Caco-2 (cell line): ENCODE measurements at regions of chr7 and their contacts with region 1.

Region 1: DNA sequence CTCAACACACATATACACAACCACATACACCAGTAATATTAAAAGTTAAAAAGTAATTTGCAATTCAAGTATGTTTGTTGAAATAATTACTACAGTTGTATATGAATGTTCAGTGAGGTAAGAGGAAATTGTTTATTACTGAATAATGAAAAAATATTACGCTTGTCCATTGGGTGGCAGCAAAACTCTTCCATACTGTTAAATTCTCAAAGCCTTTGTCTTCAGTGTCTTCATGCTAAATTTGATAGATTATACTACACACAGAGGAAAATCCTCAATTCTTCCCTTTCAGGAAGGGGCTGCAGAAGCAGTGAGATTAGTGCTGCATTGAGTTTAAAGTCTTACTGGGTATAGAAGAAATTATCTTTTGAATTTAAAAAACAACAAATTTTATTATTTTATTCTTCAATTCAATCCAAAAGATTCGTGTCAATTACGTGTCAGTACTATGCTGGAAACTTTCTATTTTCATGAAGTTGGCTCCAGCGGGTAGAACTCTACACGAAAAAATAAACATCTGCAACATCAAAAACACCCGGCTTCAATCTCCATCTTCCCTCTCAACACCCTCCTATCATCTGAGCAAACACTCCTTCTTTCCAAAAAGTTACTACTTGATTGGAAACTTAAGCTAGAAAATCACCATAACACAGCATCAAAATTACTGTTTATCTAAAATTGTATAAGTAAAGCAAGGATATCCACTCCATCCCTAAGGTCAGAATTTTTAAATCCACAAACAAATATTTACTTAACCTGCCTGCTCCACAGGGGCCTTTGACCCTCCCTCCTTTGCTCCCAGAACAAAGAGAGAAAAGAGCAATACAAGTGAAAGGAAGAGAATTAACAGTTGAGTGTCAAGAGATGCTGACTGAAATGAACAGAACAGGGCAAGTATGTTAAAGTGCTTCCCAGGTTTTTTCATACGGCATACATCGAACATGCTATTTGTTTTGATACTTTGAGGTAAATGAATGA is 37.0 kb upstream of the TES start:
- DNase-seq: peak in 1 of 2 experiments; percentile 63
- H3K4me3 ChIP-seq: no peak overlapping the region
- H3K4me3 Mint-ChIP-seq: peak overlapping the region; percentile 6
- H3K27ac Mint-ChIP-seq: no peak overlapping the region
- H3K4me1 ChIP-seq: peaks cover 43% of the 10 kb centered on the region
- H3K4me1 Mint-ChIP-seq: peaks cover 37% of the 10 kb centered on the region
- H3K27me3 ChIP-seq: no peaks in the 10 kb centered on the region
- H3K27me3 Mint-ChIP-seq: no peaks in the 10 kb centered on the region
- CTCF ChIP-seq: peak; percentile 38 to 63

Region 2: GRCh38 chr7:116236020-116236630 is 62.8 kb after region 1 on chr7:
- CTCF ChIA-PET with region 1: interaction called, 3 read pairs
- POLR2A ChIA-PET with region 1: no interaction called
- intact Hi-C with region 1: loop called (anchors 1 kb)
- DNase-seq: peak in 1 of 2 experiments; percentile 47
- H3K4me3 ChIP-seq: no peak overlapping the region
- H3K4me3 Mint-ChIP-seq: no peak overlapping the region
- H3K27ac Mint-ChIP-seq: no peak overlapping the region
- H3K4me1 ChIP-seq: peaks cover 20% of the 10 kb centered on the region
- H3K4me1 Mint-ChIP-seq: peaks cover 26% of the 10 kb centered on the region
- H3K27me3 ChIP-seq: no peaks in the 10 kb centered on the region
- H3K27me3 Mint-ChIP-seq: no peaks in the 10 kb centered on the region
- CTCF ChIP-seq: peak; percentile 57 to 64

Region 3: GRCh38 chr7:116354546-116355408 is 181.4 kb after region 1 on chr7:
- CTCF ChIA-PET with region 1: no interaction called
- POLR2A ChIA-PET with region 1: no interaction called
- intact Hi-C with region 1: loop called (anchors 5 kb)
- DNase-seq: peak; percentile 52 to 54
- H3K4me3 ChIP-seq: no peak overlapping the region
- H3K4me3 Mint-ChIP-seq: peak overlapping the region; percentile 47
- H3K27ac Mint-ChIP-seq: peak overlapping the region; percentile 71
- H3K4me1 ChIP-seq: peaks cover 34% of the 10 kb centered on the region
- H3K4me1 Mint-ChIP-seq: peaks cover 16% of the 10 kb centered on the region
- H3K27me3 ChIP-seq: no peaks in the 10 kb centered on the region
- H3K27me3 Mint-ChIP-seq: no peaks in the 10 kb centered on the region
- CTCF ChIP-seq: no peak

Region 4: DNA sequence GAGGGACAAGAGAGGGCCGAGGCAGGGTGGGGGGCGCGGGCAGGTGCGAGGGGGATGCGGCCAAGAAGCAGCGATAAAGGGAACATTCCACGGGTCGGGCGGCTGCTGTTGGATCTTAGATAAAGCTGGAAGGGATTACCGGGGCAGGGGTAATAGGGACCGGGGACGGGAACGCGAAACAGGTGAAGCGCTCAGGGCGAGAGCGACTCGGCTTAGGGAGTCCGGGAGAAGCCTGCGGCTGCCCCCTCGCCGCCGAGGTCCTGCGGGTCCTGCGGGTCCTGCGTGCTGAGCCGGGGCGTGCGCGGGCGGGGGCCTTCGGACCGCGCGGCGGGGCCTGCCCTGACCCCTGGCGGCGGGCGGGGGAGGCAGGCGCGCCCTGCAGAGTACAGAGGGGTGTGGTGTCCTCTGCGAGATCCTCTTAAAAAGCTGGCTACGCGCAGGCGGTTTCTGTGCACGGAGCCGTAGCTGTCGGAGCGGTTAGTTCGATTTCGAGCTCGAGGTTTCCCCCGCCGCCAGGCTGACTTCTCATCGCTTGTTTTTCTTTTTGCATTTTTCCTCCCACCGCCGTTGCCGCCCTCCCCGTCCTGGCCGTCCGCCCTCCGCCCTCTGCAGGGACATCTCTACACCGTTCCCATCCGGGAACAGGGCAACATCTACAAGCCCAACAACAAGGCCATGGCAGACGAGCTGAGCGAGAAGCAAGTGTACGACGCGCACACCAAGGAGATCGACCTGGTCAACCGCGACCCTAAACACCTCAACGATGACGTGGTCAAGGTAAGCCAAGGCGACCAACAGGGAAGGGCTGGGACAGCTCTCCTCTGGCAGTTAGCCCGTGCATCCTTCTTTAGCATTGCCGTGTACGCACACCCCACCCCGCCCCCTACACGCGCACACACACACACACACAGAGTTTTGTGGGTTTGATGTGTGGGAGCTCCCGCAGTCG is 352.8 kb after region 1 on chr7:
- CTCF ChIA-PET with region 1: interaction called, 4 read pairs
- POLR2A ChIA-PET with region 1: no interaction called
- intact Hi-C with region 1: loop called (anchors 1 kb)
- DNase-seq: peak; percentile 75 to 88
- H3K4me3 ChIP-seq: peak overlapping the region; percentile 60
- H3K4me3 Mint-ChIP-seq: peak overlapping the region; percentile 94
- H3K27ac Mint-ChIP-seq: peak overlapping the region; percentile 52
- H3K4me1 ChIP-seq: peaks cover 10% of the 10 kb centered on the region; the same call in 1 of the 2 replicates
- H3K4me1 Mint-ChIP-seq: no peaks in the 10 kb centered on the region
- H3K27me3 ChIP-seq: no peaks in the 10 kb centered on the region
- H3K27me3 Mint-ChIP-seq: no peaks in the 10 kb centered on the region
- CTCF ChIP-seq: peak; percentile 66 to 91

Region 5: DNA sequence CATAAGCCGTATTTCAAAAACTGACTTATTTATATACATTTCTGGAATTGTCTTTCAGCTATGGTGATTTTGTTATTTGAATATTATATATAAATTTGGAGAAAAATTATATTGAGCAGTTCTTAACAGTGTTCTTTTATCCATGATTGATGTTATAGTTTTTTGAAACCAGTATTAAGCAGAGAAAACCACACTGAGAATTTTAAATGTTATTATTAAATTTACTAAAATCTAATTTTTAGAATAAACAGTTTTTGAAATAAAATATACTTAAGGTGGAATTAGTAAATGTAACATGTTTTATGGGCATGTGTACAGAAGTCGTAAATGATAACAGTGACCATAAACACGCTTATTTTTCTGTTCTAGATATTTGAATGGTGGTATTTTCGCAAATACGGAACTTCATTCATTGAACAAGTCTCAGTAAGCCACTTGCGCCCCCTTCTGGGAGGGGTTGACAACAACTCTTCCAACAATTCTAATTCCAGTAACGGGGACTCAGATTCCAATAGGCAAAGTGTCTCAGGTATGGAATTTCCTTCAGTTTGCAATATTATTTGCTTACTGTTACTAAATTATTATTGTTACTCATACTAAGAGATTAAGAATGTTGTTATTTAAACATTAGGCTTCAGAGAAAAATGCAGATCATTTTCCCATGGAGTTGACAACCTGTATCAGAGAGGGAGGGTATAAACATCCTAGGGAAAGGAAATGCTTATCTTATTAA is 946.0 kb after region 1 on chr7:
- CTCF ChIA-PET with region 1: no interaction called
- POLR2A ChIA-PET with region 1: no interaction called
- intact Hi-C with region 1: loop called (anchors 5 kb)
- DNase-seq: peak; percentile 70 to 85
- H3K4me3 ChIP-seq: no peak overlapping the region
- H3K4me3 Mint-ChIP-seq: no peak overlapping the region
- H3K27ac Mint-ChIP-seq: no peak overlapping the region
- H3K4me1 ChIP-seq: no peaks in the 10 kb centered on the region
- H3K4me1 Mint-ChIP-seq: no peaks in the 10 kb centered on the region
- H3K27me3 ChIP-seq: no peaks in the 10 kb centered on the region
- H3K27me3 Mint-ChIP-seq: no peaks in the 10 kb centered on the region
- CTCF ChIP-seq: peak; percentile 80 to 85